Caco-2 (cell line): ENCODE measurements at regions of chr10 and their contacts with region 1.

Region 1: DNA sequence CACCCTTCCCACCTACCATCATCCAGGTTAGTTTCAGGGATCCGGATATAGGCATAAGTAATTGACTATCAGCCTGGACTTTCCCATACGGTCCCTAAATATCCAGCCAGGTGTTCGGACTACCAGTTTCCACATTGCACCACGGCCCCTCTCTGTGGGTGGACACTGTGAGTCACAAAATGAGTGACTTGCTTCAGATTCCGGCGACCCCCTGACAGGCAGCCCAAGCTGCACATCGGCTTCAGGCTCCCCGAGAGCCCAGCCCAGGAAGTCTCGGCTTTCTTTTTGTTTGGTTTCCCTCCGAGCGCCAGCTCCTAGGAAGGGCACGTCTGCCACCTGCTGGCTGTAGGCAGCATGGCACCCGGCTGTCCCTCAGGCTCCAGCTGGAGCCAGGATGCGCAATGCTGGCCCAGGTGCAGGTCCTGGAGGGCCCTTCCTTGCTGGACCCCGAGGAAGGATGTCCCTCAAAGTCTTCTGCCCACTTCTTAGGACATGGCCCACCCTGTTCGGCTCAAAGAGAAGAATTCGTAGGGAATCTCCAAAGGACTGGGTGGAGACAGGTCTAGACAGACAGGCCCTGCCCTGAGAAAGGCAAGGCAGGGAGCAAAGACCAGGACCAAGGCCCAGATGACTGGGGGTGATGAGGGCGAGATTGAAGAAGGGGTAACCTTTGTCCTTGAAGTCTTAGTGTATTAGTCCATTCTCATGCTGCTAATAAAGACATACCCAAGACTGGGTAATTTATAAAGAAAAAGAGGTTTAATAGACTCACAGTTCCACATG is 10.6 kb downstream of the HABP2 start:
- DNase-seq: peak; percentile 72 to 87
- H3K4me3 ChIP-seq: peak overlapping the region; percentile 31
- H3K4me3 Mint-ChIP-seq: peak overlapping the region; percentile 80
- H3K27ac Mint-ChIP-seq: peak overlapping the region; percentile 85
- H3K4me1 ChIP-seq: peaks cover 40% of the 10 kb centered on the region
- H3K4me1 Mint-ChIP-seq: peaks cover 46% of the 10 kb centered on the region
- H3K27me3 ChIP-seq: no peaks in the 10 kb centered on the region
- H3K27me3 Mint-ChIP-seq: no peaks in the 10 kb centered on the region
- CTCF ChIP-seq: peak; percentile 98

Region 2: DNA sequence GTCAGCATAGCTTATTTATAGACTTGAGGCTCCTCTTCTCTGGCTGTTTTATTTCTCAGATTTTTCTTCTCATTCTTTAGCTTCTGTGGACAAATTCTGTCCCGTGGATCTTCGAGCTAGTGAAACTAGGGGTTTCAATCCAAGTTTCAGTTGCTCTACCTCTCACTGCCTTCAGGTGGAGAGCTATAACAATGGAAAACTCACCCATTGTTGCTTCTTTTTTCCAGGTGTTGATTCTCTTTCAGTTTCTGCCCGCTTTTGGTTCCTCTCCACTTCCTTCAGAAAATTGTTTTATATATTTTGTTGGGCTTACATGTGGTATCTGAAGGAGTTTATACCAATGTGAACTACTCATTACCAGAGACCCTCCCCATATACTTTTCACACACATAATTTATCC is 347.4 kb before region 1 on chr10:
- CTCF ChIA-PET with region 1: interaction called, 5 read pairs
- POLR2A ChIA-PET with region 1: no interaction called
- intact Hi-C with region 1: loop called (anchors 1 kb)
- DNase-seq: peak in 1 of 2 experiments; percentile 31
- H3K4me3 ChIP-seq: no peak overlapping the region
- H3K4me3 Mint-ChIP-seq: no peak overlapping the region
- H3K27ac Mint-ChIP-seq: no peak overlapping the region
- H3K4me1 ChIP-seq: 0 out of 2 replicates have a peak, but pooled peaks cover 3% of the 10 kb centered on the region
- H3K4me1 Mint-ChIP-seq: peaks cover 7% of the 10 kb centered on the region
- H3K27me3 ChIP-seq: no peaks in the 10 kb centered on the region
- H3K27me3 Mint-ChIP-seq: peaks cover 3% of the 10 kb centered on the region
- CTCF ChIP-seq: peak; percentile 41 to 42

Region 3: DNA sequence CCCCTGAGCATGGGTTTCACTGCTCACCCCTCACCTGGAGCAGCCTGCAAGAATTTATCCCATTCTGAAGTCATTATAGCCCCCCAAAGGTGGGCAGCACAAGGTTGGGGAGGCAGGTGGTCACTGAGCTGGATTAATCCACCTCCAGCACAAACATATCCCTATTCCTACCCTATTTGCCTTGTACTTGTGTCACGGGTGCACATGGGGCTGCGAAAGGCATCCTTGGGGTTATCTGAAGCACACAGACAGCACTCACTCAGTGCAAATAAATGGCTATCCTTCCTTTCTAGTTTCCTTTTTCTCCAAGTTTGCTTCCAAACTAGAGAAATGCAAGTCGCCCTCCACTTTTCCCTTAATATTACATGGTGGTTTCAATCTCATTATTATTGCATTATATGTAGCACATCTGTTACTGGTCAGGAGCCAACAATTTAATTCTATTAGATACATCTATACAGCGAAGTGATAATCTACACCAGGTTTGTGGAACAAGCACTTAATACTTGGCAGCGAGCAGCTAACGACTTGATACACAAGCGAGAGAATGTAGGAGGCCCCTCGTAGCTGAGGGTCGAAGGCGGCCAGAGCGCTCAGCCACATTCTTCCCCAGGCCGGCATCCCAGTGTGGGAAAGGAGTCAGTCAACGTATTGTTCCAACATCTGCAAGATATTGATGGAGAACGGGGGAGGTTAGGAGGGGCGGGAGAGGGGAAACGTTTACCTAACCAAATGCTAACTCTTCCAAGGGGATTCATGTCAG is 131.9 kb before region 1 on chr10:
- CTCF ChIA-PET with region 1: interaction called, 6 read pairs
- POLR2A ChIA-PET with region 1: no interaction called
- intact Hi-C with region 1: loop called (anchors 5 kb)
- DNase-seq: no peak
- H3K4me3 ChIP-seq: no peak overlapping the region
- H3K4me3 Mint-ChIP-seq: no peak overlapping the region
- H3K27ac Mint-ChIP-seq: no peak overlapping the region
- H3K4me1 ChIP-seq: peaks cover 18% of the 10 kb centered on the region
- H3K4me1 Mint-ChIP-seq: peaks cover 10% of the 10 kb centered on the region
- H3K27me3 ChIP-seq: no peaks in the 10 kb centered on the region
- H3K27me3 Mint-ChIP-seq: peaks cover 9% of the 10 kb centered on the region
- CTCF ChIP-seq: no peak

Region 4: DNA sequence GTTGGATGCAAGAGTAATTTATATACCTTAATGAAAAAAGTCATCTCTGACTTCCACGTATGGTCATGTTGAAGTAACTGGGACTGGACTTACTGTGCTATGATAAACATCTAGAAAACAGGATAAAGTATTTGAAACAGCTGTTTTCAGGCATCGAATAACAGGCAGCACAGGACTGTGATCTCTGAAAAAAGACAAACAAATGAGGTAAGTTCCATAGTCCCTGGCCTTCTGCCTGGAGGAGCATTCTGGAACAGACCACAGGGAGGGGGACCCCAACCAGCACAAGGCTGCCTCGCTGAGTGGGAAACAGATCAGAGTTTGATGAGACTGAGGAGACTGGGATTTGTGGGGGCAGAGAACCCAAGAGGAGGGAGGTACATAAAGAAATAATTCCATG is 99.7 kb before region 1 on chr10:
- CTCF ChIA-PET with region 1: no interaction called
- POLR2A ChIA-PET with region 1: no interaction called
- intact Hi-C with region 1: no loop called
- DNase-seq: no peak
- H3K4me3 ChIP-seq: no peak overlapping the region
- H3K4me3 Mint-ChIP-seq: no peak overlapping the region
- H3K27ac Mint-ChIP-seq: no peak overlapping the region
- H3K4me1 ChIP-seq: no peaks in the 10 kb centered on the region
- H3K4me1 Mint-ChIP-seq: peaks cover 14% of the 10 kb centered on the region
- H3K27me3 ChIP-seq: no peaks in the 10 kb centered on the region
- H3K27me3 Mint-ChIP-seq: no peaks in the 10 kb centered on the region
- CTCF ChIP-seq: no peak

Region 5: DNA sequence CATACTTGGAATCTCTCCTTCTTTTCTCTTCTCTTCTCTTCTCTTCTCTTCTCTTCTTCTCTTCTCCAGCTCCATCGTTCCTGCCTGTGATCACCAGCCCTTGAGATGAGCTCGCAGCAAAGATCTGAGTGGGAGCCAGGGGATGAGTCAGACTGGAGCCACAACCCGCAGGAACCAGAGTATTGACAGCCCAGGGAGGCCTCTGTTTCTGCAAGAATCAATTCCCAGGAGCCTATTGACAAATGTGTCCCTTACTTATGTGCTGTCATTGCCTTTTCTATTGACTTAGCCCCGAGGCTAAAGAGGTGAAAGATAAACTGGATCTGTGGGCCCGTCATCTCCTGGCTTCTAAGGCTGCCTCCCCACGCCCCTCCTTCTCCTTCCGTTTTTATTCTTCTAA is 23.7 kb before region 1 on chr10:
- CTCF ChIA-PET with region 1: interaction called, 4 read pairs
- POLR2A ChIA-PET with region 1: no interaction called
- intact Hi-C with region 1: loop called (anchors 1 kb)
- DNase-seq: peak; percentile 52 to 56
- H3K4me3 ChIP-seq: no peak overlapping the region
- H3K4me3 Mint-ChIP-seq: no peak overlapping the region
- H3K27ac Mint-ChIP-seq: peak overlapping the region; percentile 66
- H3K4me1 ChIP-seq: peaks cover 47% of the 10 kb centered on the region
- H3K4me1 Mint-ChIP-seq: peaks cover 33% of the 10 kb centered on the region
- H3K27me3 ChIP-seq: no peaks in the 10 kb centered on the region
- H3K27me3 Mint-ChIP-seq: no peaks in the 10 kb centered on the region
- CTCF ChIP-seq: no peak